ENCODE measurements at regions of chr22 and their contacts with region 1.

Region 1: DNA sequence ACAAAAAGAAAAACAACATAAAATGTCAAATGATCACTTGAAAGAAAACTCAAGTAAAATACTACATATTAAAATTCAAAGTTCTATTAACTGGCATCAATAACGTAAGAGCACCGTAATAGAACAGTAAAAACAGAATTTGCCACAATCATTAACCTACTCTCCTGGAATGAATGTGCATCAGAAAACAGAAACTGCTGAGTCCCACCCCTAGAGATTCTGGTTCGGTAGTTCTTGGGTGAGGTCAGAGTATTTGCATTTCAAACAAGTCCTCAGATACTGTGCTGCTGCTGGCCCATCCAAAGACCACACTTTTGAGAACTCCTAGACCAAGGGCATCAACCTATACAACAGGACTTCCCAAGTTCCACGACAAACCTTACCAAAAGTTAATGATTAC is 23.5 kb downstream of the PITPNB start:
- DNase-seq: no peak
- ATAC-seq: peak in 3 of 4 donors; percentile 31 to 47 (median 42)
- H3K4me3 ChIP-seq: no peak overlapping the region
- H3K27ac ChIP-seq: no peak overlapping the region
- H3K4me1 ChIP-seq: peaks cover 0 to 7% (median 5%) of the 10 kb centered on the region in 3 donors
- H3K27me3 ChIP-seq: no peaks in the 10 kb centered on the region
- CTCF ChIP-seq: no peak

Region 2: DNA sequence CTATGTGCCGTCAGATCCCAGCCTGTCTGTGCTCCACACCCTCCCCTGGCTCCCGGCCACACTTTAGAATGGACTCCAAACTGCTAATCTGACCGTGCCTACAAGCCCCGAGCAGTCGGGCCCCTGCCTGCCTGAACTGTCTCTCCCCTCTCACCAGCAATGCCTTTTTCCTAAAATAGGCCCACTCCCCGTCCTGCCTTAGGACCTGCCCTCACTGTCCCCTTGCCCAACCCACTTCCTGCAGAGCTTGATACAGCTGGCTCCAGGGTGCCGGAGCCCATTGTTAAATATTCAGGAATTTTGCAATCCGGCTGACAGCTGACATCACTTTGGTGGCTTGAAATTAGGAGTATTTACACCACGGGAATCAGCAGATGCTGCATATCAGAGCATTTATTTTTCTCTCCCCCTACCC is 115.4 kb before region 1 on chr22:
- intact Hi-C with region 1: no loop called
- DNase-seq: no peak
- ATAC-seq: peak in 1 of 4 donors; percentile 44
- H3K4me3 ChIP-seq: no peak overlapping the region
- H3K27ac ChIP-seq: no peak overlapping the region
- H3K4me1 ChIP-seq: no peaks in the 10 kb centered on the region
- H3K27me3 ChIP-seq: no peaks in the 10 kb centered on the region
- CTCF ChIP-seq: no peak

Region 3: GRCh38 chr22:28002181-28002700 is 106.6 kb after region 1 on chr22:
- intact Hi-C with region 1: loop called in 2 of 3 experiments (anchors 5 to 10 kb)
- DNase-seq: no peak
- ATAC-seq: no peak
- H3K4me3 ChIP-seq: no peak overlapping the region
- H3K27ac ChIP-seq: no peak overlapping the region
- H3K4me1 ChIP-seq: no peaks in the 10 kb centered on the region
- H3K27me3 ChIP-seq: no peaks in the 10 kb centered on the region
- CTCF ChIP-seq: no peak

Region 4: GRCh38 chr22:28009272-28009827 is 113.8 kb after region 1 on chr22:
- intact Hi-C with region 1: loop called in 2 of 3 experiments (anchors 5 to 10 kb)
- DNase-seq: peak; percentile 60 to 89 (median 78)
- ATAC-seq: peak; percentile 88 to 94 (median 93)
- H3K4me3 ChIP-seq: no peak overlapping the region
- H3K27ac ChIP-seq: no peak overlapping the region
- H3K4me1 ChIP-seq: no peaks in the 10 kb centered on the region
- H3K27me3 ChIP-seq: no peaks in the 10 kb centered on the region
- CTCF ChIP-seq: peak; percentile 85 to 94 (median 88)